Panc1 (cell line): ENCODE measurements at regions of chr7 and their contacts with region 1.

Region 1: GRCh38 chr7:131836733-131837132 is 280.3 kb upstream of the PODXL start:
- DNase-seq: no peak
- ATAC-seq: no peak
- H3K4me3 ChIP-seq: no peak overlapping the region
- H3K27ac ChIP-seq: no peak overlapping the region
- H3K4me1 ChIP-seq: no peaks in the 10 kb centered on the region
- H3K27me3 ChIP-seq: peaks cover 5% of the 10 kb centered on the region
- CTCF ChIP-seq: no peak

Region 2: GRCh38 chr7:131633342-131633843 is 203.3 kb before region 1 on chr7:
- CTCF ChIA-PET with region 1: no interaction called
- POLR2A ChIA-PET with region 1: no interaction called
- in situ Hi-C with region 1: no loop called
- intact Hi-C with region 1: no loop called
- DNase-seq: no peak
- ATAC-seq: peak; percentile 88
- H3K4me3 ChIP-seq: no peak overlapping the region
- H3K27ac ChIP-seq: no peak overlapping the region
- H3K4me1 ChIP-seq: peaks cover 8% of the 10 kb centered on the region
- H3K27me3 ChIP-seq: no peaks in the 10 kb centered on the region
- CTCF ChIP-seq: no peak

Region 3: GRCh38 chr7:131890176-131890575 is 53.4 kb after region 1 on chr7:
- CTCF ChIA-PET with region 1: no interaction called
- POLR2A ChIA-PET with region 1: interaction called, 15 read pairs
- in situ Hi-C with region 1: no loop called
- intact Hi-C with region 1: no loop called
- DNase-seq: no peak
- ATAC-seq: no peak
- H3K4me3 ChIP-seq: no peak overlapping the region
- H3K27ac ChIP-seq: no peak overlapping the region
- H3K4me1 ChIP-seq: no peaks in the 10 kb centered on the region
- H3K27me3 ChIP-seq: no peaks in the 10 kb centered on the region
- CTCF ChIP-seq: no peak

Region 4: GRCh38 chr7:131976411-131976810 is 139.7 kb after region 1 on chr7:
- CTCF ChIA-PET with region 1: no interaction called
- POLR2A ChIA-PET with region 1: no interaction called
- in situ Hi-C with region 1: no loop called
- intact Hi-C with region 1: no loop called
- DNase-seq: no peak
- ATAC-seq: no peak
- H3K4me3 ChIP-seq: no peak overlapping the region
- H3K27ac ChIP-seq: no peak overlapping the region
- H3K4me1 ChIP-seq: no peaks in the 10 kb centered on the region
- H3K27me3 ChIP-seq: 0 out of 2 replicates have a peak, but pooled peaks cover 3% of the 10 kb centered on the region
- CTCF ChIP-seq: no peak